Posterior vena cava (tissue), 2 donors: ENCODE measurements at regions of chr4 and their contacts with region 1.

Region 1: DNA sequence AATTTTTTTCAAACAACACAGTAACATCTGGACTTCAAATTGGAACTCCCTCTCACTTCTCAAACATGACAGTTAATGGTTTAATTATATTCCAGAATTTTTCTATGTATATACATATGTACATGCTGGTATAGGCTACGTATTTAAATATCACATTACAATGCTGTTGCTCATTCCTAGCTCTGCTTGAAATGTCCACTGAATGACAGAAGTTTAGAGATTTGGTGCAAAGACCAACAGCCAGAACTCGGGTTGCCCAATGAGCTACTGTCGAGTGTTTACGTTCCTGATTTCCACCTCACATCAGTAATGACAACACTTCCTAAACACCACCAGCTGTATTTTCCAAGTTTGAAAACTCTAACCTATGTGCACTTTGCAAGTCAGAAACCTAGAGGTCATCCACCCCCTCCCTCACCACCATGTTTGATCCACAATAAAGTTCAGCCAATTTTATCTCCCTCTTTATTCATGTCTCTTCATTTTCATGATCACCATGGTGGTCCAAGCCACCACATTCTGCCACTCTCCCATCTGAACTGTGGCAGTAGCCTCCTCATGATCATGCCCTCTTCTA is 49.3 kb upstream of the RPL34 start:
- DNase-seq: no peak

Region 2: DNA sequence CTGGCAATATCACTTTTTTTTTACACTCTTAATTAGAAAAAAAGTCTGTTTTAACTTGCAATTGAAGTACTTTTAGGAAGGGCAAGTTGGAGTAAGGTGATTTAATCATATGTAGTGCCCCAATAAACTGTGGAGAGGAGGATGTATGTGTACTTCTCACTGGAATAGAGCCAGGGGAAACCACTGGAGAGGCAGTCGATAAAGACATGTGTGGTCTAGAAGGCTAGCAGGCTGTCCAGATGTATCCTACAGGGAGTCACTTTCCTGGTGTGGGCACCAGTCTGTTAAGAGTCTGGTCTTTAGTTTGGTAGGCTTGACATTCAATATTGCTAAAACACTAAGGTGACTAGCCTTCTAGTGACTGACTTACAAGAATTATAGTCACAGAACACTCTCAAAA is 755.9 kb before region 1 on chr4:
- intact Hi-C with region 1: no loop called
- DNase-seq: no peak

Region 3: GRCh38 chr4:108018040-108018883 is 552.8 kb before region 1 on chr4:
- intact Hi-C with region 1: loop called in 1 of 2 experiments (anchors 5 kb)
- DNase-seq: peak; percentile 91